Psoas muscle (tissue), 8 donors: ENCODE measurements at regions of chr19 and their contacts with region 1.

Region 1: GRCh38 chr19:34772697-34773554 is at the start of gene ZNF599:
- DNase-seq: peak; percentile 92 to 96
- ATAC-seq: peak; percentile 99 to 100 (median 100)
- H3K4me3 ChIP-seq: peak within 1 kb of the TSS; percentile 83
- H3K27ac ChIP-seq: peak within 1 kb of the TSS; percentile 74
- H3K4me1 ChIP-seq: peaks cover 7% of the 10 kb centered on the region
- H3K27me3 ChIP-seq: peaks cover 0 to 2% (median 0%) of the 10 kb centered on the region in 3 donors
- CTCF ChIP-seq: no peak
- total RNA-seq, gene ZNF599: 1.7 to 3.8 (median 2.8) TPM

Region 2: GRCh38 chr19:34733826-34734600 is 38.9 kb before region 1 on chr19 and contains the start of gene ZNF181:
- intact Hi-C with region 1: loop called in 1 of 2 experiments (anchors 5 kb)
- DNase-seq: peak; percentile 91 to 94
- ATAC-seq: peak; percentile 91 to 95 (median 94)
- H3K4me3 ChIP-seq: peak within 1 kb of the TSS; percentile 71
- H3K27ac ChIP-seq: peak within 1 kb of the TSS; percentile 96
- H3K4me1 ChIP-seq: peaks cover 19% of the 10 kb centered on the region
- H3K27me3 ChIP-seq: no peaks in the 10 kb centered on the region
- CTCF ChIP-seq: no peak
- total RNA-seq, gene ZNF181: 15.4 to 21.2 (median 17.9) TPM

Region 3: DNA sequence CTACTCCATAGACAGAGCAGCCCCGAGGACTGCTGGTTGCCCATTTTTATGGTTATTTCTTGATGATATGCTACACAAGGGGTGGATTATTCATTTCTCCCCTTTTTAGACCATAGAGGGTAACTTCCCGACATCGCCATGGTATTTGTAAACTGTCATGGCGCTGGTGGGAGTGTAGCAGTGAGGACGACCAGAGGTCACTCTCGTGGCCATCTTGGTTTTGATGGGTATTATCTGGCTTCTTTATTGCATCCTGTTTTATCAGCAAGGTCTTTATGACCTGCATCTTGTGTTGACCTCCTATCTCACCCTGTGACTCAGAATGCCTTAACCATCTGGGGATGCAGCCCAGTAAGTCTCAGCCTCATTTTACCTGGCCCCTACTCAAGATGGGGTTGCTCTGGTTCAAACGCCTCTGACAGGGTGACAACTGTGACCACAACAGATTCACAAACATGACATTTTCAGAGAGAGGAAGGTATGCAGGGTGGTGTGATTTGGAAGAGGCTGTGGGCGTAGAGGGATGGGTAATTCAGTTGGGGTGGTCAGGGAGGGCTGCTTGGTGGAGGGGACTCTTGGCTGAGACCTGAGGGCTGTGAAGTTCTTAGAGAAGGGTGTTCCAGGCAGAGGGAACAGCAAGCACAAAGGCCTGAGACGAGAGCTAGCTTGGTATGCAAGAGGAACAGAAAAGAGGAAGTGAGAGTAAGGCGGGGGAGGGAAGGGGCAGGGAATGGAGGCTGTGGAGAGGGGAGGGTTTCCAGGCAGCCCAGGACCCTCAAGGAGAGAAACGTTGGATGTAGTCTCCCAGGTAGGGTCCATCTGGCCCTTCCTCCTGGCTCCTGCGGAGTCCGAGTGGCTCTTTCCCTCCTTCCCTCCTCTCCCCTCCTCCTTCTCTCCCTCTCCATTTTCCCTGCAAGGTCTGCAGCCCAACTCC is 432.1 kb after region 1 on chr19:
- intact Hi-C with region 1: no loop called
- DNase-seq: no peak
- ATAC-seq: no peak
- H3K4me3 ChIP-seq: no peak overlapping the region
- H3K27ac ChIP-seq: no peak overlapping the region
- H3K4me1 ChIP-seq: no peaks in the 10 kb centered on the region
- H3K27me3 ChIP-seq: peaks cover 0 to 9% (median 0%) of the 10 kb centered on the region in 3 donors
- CTCF ChIP-seq: no peak